ENCODE measurements at regions of chr19 and their contacts with region 1.

Region 1: GRCh38 chr19:41746593-41747227 is 8.6 kb upstream of the CEACAM6 start:
- DNase-seq: peak; percentile 37 to 50 (median 46)
- H3K4me3 ChIP-seq: no peak overlapping the region
- H3K4me3 Mint-ChIP-seq: no peak overlapping the region
- H3K27ac ChIP-seq: no peak overlapping the region
- H3K27ac Mint-ChIP-seq: no peak overlapping the region
- H3K4me1 ChIP-seq: no peaks in the 10 kb centered on the region
- H3K4me1 Mint-ChIP-seq: peaks cover 0 to 3% (median 1%) of the 10 kb centered on the region in 4 donors
- H3K27me3 ChIP-seq: no peaks in the 10 kb centered on the region
- H3K27me3 Mint-ChIP-seq: peaks cover 36 to 37% of the 10 kb centered on the region in 2 donors

Region 2: DNA sequence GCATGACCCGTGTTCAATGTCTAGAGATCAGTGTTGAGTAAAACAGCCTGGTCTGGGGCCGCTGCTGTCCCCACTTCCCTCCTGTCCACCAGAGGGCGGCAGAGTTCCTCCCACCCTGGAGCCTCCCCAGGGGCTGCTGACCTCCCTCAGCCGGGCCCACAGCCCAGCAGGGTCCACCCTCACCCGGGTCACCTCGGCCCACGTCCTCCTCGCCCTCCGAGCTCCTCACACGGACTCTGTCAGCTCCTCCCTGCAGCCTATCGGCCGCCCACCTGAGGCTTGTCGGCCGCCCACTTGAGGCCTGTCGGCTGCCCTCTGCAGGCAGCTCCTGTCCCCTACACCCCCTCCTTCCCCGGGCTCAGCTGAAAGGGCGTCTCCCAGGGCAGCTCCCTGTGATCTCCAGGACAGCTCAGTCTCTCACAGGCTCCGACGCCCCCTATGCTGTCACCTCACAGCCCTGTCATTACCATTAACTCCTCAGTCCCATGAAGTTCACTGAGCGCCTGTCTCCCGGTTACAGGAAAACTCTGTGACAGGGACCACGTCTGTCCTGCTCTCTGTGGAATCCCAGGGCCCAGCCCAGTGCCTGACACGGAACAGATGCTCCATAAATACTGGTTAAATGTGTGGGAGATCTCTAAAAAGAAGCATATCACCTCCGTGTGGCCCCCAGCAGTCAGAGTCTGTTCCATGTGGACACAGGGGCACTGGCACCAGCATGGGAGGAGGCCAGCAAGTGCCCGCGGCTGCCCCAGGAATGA is 39.8 kb before region 1 on chr19:
- CTCF ChIA-PET with region 1: interaction called, 7 read pairs
- POLR2A ChIA-PET with region 1: no interaction called
- intact Hi-C with region 1: loop called (anchors 1 kb)
- DNase-seq: peak; percentile 68 to 80 (median 74)
- H3K4me3 ChIP-seq: peak overlapping the region; percentile 29 to 45
- H3K4me3 Mint-ChIP-seq: peak overlapping the region; percentile 63 to 85 (median 78)
- H3K27ac ChIP-seq: no peak overlapping the region
- H3K27ac Mint-ChIP-seq: no peak overlapping the region
- H3K4me1 ChIP-seq: no peaks in the 10 kb centered on the region
- H3K4me1 Mint-ChIP-seq: peaks cover 3 to 6% (median 6%) of the 10 kb centered on the region in 4 donors
- H3K27me3 ChIP-seq: peaks cover 5% of the 10 kb centered on the region
- H3K27me3 Mint-ChIP-seq: peaks cover 17 to 31% of the 10 kb centered on the region in 2 donors

Region 3: DNA sequence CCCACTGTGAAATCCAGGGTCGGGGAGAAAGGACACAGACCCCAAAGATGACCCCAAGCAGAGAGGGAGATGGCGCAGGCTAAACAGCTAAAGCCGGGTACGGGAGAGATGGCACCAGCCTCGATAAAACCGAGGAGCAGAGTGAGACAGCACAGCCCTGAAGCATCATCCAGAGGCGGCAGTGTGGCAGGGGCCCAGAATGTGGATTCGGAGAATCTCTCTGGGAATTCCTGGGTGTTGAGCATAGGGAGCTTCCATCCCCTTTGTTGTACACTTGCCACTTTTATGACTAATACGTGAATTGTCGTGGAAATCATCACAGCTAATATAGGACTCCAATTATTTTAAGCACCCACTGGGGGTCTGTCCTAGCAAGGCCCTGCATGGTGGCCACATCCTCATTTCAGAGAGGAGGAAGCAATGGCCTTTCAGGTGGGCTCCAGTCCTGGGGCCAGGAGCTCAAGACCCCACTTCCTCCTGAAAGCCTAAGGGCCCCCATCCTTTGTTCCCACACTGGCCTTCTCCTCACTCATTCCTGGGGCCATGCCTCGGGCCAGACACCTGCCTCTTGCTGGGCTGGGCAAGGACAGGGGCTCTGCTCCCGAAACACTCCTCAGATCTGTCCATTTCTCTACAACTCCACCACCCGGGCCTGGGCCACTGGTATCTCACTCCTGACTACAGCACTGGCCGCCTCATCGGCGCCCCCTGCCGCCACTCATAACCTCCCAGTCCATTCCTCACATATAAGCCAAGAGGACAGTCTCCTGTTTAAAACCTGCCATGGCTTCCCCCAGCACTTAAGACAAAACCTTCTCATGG is 276.6 kb after region 1 on chr19:
- CTCF ChIA-PET with region 1: no interaction called
- POLR2A ChIA-PET with region 1: no interaction called
- intact Hi-C with region 1: no loop called
- DNase-seq: peak in 1 of 5 donors; percentile 5
- H3K4me3 ChIP-seq: no peak overlapping the region
- H3K4me3 Mint-ChIP-seq: no peak overlapping the region
- H3K27ac ChIP-seq: no peak overlapping the region
- H3K27ac Mint-ChIP-seq: no peak overlapping the region
- H3K4me1 ChIP-seq: no peaks in the 10 kb centered on the region
- H3K4me1 Mint-ChIP-seq: peaks cover 0 to 4% (median under 1%) of the 10 kb centered on the region in 4 donors
- H3K27me3 ChIP-seq: no peaks in the 10 kb centered on the region
- H3K27me3 Mint-ChIP-seq: peaks cover 11 to 15% of the 10 kb centered on the region in 2 donors

Measured in CD4-positive, alpha-beta memory T cell (primary cell).